ENCODE measurements at regions of chr20 and their contacts with region 1.

Region 1: GRCh38 chr20:52410182-52410647 is 218.6 kb upstream of the ZFP64 start:
- DNase-seq: peak; percentile 61
- ATAC-seq: peak; percentile 85
- H3K4me3 Mint-ChIP-seq: peak overlapping the region; percentile 53
- H3K27ac Mint-ChIP-seq: peak overlapping the region; percentile 84
- H3K4me1 Mint-ChIP-seq: peaks cover 66% of the 10 kb centered on the region
- H3K27me3 Mint-ChIP-seq: no peaks in the 10 kb centered on the region

Region 2: GRCh38 chr20:52361650-52362049 is 48.6 kb before region 1 on chr20:
- CTCF ChIA-PET with region 1: no interaction called
- POLR2A ChIA-PET with region 1: no interaction called
- intact Hi-C with region 1: no loop called
- DNase-seq: no peak
- ATAC-seq: no peak
- H3K4me3 Mint-ChIP-seq: no peak overlapping the region
- H3K27ac Mint-ChIP-seq: no peak overlapping the region
- H3K4me1 Mint-ChIP-seq: peaks cover 13% of the 10 kb centered on the region
- H3K27me3 Mint-ChIP-seq: peaks cover 4% of the 10 kb centered on the region

Region 3: GRCh38 chr20:52494244-52494643 is 84.0 kb after region 1 on chr20:
- CTCF ChIA-PET with region 1: no interaction called
- POLR2A ChIA-PET with region 1: interaction called, 4 read pairs
- intact Hi-C with region 1: loop called (anchors 5 kb)
- DNase-seq: peak; percentile 80
- ATAC-seq: peak; percentile 98
- H3K4me3 Mint-ChIP-seq: peak overlapping the region; percentile 9
- H3K27ac Mint-ChIP-seq: peak overlapping the region; percentile 40
- H3K4me1 Mint-ChIP-seq: peaks cover 18% of the 10 kb centered on the region
- H3K27me3 Mint-ChIP-seq: no peaks in the 10 kb centered on the region

Region 4: GRCh38 chr20:52665441-52665840 is 255.2 kb after region 1 on chr20:
- CTCF ChIA-PET with region 1: no interaction called
- POLR2A ChIA-PET with region 1: no interaction called
- intact Hi-C with region 1: no loop called
- DNase-seq: no peak
- ATAC-seq: no peak
- H3K4me3 Mint-ChIP-seq: no peak overlapping the region
- H3K27ac Mint-ChIP-seq: no peak overlapping the region
- H3K4me1 Mint-ChIP-seq: no peaks in the 10 kb centered on the region
- H3K27me3 Mint-ChIP-seq: no peaks in the 10 kb centered on the region

Region 5: DNA sequence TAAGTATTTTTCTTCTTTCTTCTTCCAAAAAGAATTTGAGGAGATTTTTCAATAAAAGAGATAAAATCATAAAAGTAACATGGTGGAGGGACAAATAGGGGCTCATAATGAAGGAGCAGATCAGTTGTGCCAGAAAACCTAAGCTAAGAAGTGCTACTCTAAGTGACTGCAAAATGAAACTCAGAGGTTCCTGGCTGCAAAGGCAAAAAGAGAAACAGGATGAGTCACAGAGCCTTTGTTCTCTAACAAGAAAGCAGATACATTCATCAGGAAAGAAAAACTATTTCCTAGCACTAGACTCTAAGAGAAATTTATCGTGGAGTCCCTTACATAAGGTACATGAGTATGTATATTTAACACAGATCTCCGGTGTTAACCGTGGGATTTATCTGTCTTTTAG is 611.7 kb after region 1 on chr20:
- CTCF ChIA-PET with region 1: no interaction called
- POLR2A ChIA-PET with region 1: no interaction called
- intact Hi-C with region 1: loop called in 1 of 2 experiments (anchors 5 kb)
- DNase-seq: peak; percentile 22
- ATAC-seq: peak; percentile 84
- H3K4me3 Mint-ChIP-seq: peak overlapping the region; percentile 41
- H3K27ac Mint-ChIP-seq: peak overlapping the region; percentile 97
- H3K4me1 Mint-ChIP-seq: peaks cover 78% of the 10 kb centered on the region
- H3K27me3 Mint-ChIP-seq: no peaks in the 10 kb centered on the region

Region 6: DNA sequence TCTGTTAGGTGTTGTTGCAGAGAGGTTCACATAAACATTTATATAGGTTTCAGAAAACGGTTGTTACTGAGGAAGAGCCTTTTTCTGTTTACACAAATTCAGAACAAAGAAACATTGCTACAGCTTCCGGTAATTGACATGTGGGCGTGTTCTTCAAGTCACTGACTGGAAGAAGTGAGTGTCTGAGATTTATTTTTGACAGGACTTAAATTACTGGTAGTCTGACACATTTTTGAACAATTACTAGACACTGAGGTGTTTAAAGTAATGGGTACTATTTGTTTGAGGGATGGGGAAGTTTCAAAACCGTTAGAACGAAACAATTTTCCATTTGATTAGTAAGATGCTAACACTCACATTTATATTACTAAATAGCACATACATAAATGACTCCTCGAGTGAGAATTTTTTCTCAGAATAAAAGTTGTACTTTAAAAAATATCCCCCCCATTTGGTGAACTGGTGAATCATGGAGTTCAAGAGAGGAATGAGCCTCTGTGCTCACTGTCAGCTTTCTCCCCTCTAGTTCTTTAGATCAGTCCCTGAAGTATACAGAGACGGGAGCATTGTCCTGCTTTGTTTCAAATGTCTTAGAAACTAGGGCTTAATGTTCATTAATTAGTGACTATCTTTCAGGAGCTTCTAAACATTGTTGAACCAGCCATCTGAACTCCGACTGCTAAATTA is 660.6 kb after region 1 on chr20:
- CTCF ChIA-PET with region 1: no interaction called
- POLR2A ChIA-PET with region 1: no interaction called
- intact Hi-C with region 1: loop called in 1 of 2 experiments (anchors 2 kb)
- DNase-seq: peak; percentile 64
- ATAC-seq: peak; percentile 77
- H3K4me3 Mint-ChIP-seq: peak overlapping the region; percentile 24
- H3K27ac Mint-ChIP-seq: peak overlapping the region; percentile 93
- H3K4me1 Mint-ChIP-seq: peaks cover 54% of the 10 kb centered on the region
- H3K27me3 Mint-ChIP-seq: peaks cover 3% of the 10 kb centered on the region

Region 7: GRCh38 chr20:53157443-53158408 is 747.5 kb after region 1 on chr20:
- CTCF ChIA-PET with region 1: no interaction called
- POLR2A ChIA-PET with region 1: no interaction called
- intact Hi-C with region 1: loop called in 1 of 2 experiments (anchors 5 kb)
- DNase-seq: peak; percentile 60
- ATAC-seq: no peak
- H3K4me3 Mint-ChIP-seq: no peak overlapping the region
- H3K27ac Mint-ChIP-seq: peak overlapping the region; percentile 44
- H3K4me1 Mint-ChIP-seq: peaks cover 53% of the 10 kb centered on the region
- H3K27me3 Mint-ChIP-seq: peaks cover under 1% of the 10 kb centered on the region

Region 8: DNA sequence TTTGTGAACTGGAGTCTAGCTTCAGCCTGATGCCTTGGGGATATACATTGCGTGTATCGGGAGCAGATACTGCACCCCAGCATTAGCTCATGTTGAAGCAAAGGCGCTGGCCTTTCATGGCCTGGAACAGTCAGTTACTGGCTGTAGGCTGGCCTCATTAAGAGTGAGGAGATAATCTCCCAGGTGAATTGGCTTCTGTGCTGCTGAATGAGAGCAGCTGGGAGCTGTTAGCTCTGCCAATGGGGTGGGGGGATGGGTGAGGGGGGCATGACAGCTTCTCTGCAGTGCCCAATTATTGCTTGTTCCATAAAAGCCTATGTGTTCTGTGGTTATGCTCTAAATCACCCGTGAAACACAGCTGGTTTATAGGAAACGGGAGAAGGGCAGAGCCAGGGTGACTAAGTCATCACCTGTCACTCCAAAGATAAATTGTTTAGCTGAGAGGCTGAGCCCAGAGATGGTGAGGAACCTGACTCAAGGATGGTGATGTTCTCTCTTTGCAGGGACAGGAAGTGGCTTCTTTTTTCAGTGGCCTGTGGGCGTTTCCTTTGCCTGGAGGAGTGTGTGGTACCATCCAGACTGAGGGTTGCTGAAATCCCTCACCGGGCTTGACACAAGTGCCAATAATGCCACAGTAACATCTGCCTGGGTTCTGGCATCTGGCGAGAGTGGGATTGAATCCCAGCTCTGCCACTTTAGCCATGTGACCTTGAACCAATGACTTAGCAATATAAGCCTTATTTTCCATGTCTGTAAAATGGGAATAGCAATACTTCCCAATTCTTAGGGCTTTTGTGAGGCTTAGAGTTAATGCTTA is 1489.3 kb after region 1 on chr20:
- CTCF ChIA-PET with region 1: no interaction called
- POLR2A ChIA-PET with region 1: no interaction called
- intact Hi-C with region 1: loop called in 1 of 2 experiments (anchors 10 kb)
- DNase-seq: peak; percentile 89
- ATAC-seq: peak; percentile 92
- H3K4me3 Mint-ChIP-seq: peak overlapping the region; percentile 10
- H3K27ac Mint-ChIP-seq: peak overlapping the region; percentile 92
- H3K4me1 Mint-ChIP-seq: peaks cover 49% of the 10 kb centered on the region
- H3K27me3 Mint-ChIP-seq: no peaks in the 10 kb centered on the region

Measured in activated CD4-positive, alpha-beta T cell treated with anti-CD3 and anti-CD28 coated beads for 36 hours (primary cell).